Mammary epithelial cell (primary cell): ENCODE measurements at regions of chr2 and their contacts with region 1.

Region 1: DNA sequence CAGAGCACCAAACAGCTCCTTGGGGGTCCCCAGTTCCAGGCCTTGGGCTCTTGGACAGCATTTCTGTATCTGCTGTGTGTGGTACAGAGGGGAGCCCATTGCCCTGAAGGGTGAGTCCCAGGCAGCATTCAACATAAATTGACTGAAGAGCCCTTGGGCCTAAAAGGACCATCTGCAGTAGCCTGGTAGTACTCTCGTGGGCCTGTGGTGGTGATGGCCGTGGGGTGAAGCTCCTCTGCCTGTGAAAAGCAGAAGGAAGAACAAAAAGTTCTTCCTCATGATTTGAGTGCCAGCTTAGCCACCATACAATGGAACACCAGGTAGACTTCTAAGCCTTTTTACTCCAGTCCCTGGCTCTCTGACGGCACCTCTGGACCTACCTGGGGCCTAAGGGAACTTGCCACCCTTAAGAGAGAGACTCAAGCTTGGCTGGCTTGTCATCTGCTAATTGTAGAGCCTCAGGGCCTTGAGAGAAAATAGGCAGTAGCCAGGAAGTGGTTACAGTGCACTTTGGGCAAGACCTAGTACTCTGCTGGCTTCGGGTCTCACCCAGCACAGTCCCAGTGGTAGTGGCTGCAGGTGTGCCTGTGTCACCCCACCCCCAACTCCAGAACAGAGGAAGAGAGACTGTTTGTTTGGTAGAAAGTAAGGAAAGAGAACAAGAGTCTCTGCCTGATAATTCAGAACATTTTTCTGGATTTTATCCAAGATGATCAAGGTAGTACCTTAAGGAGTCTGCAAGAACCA is 84.6 kb upstream of the CERS6 start:
- DNase-seq: peak; percentile 10
- H3K4me3 ChIP-seq: no peak overlapping the region
- H3K27ac ChIP-seq: no peak overlapping the region
- H3K4me1 ChIP-seq: peaks cover 4% of the 10 kb centered on the region
- H3K27me3 ChIP-seq: no peaks in the 10 kb centered on the region
- CTCF ChIP-seq: no peak

Region 2: GRCh38 chr2:167966937-167967913 is 404.2 kb before region 1 on chr2:
- CTCF ChIA-PET with region 1: no interaction called
- dilution Hi-C with region 1: no loop called
- in situ Hi-C with region 1: no loop called
- intact Hi-C with region 1: no loop called
- DNase-seq: no peak
- H3K4me3 ChIP-seq: no peak overlapping the region
- H3K27ac ChIP-seq: no peak overlapping the region
- H3K4me1 ChIP-seq: no peaks in the 10 kb centered on the region
- H3K27me3 ChIP-seq: no peaks in the 10 kb centered on the region
- CTCF ChIP-seq: no peak

Region 3: DNA sequence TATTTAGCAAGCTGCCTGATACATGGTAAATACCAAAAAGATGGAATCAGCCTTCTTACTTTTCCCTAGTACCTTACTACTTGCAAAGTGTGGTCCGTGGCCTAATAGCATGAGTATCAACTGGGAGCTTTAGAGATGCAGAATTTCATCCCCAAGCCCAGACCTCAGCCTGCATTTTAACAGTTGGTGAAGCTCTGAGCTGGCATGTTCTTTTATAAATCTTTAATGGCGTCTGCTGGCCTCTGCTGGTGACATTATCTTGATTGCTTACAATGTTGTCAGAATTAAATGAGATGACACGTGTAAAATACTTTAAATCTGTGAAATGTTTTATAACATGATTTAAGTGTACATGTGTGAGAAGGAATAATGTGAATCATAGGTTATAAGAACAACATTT is 315.9 kb after region 1 on chr2:
- CTCF ChIA-PET with region 1: no interaction called
- dilution Hi-C with region 1: no loop called
- in situ Hi-C with region 1: loop called in 1 of 2 experiments (anchors 25 kb)
- intact Hi-C with region 1: no loop called
- DNase-seq: no peak
- H3K4me3 ChIP-seq: no peak overlapping the region
- H3K27ac ChIP-seq: no peak overlapping the region
- H3K4me1 ChIP-seq: peaks cover 43% of the 10 kb centered on the region
- H3K27me3 ChIP-seq: no peaks in the 10 kb centered on the region
- CTCF ChIP-seq: peak in 1 of 2 donors; percentile 32

Region 4: DNA sequence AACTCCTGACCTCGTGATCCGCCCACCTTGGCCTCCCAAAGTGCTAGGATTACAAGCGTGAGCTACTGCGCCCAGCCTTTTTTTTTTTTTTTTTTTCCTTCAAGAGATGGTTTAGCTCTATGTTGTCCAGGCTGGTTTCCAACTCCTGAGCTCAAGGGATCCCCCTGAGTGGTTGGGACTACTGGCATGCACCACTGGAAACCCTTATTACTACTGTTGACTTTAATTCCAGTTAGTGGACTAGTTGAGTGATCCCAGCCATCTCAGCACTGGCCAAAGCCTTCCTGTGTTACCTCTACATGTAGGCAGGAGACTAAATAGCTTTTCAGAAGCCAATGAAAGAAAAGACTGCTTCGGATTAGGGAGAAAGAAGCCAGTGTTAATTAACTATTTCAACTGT is 1419.1 kb after region 1 on chr2:
- CTCF ChIA-PET with region 1: no interaction called
- dilution Hi-C with region 1: no loop called
- in situ Hi-C with region 1: no loop called
- intact Hi-C with region 1: no loop called
- DNase-seq: no peak
- H3K4me3 ChIP-seq: no peak overlapping the region
- H3K27ac ChIP-seq: no peak overlapping the region
- H3K4me1 ChIP-seq: peaks cover 4% of the 10 kb centered on the region
- H3K27me3 ChIP-seq: no peaks in the 10 kb centered on the region
- CTCF ChIP-seq: no peak